HAP-1 (cell line): ENCODE measurements at regions of chr3 and their contacts with region 1.

Region 1: GRCh38 chr3:122679085-122679881 is 1.4 kb upstream of the PARP14 start:
- DNase-seq: peak; percentile 74 to 89
- H3K4me3 ChIP-seq: no peak overlapping the region
- H3K4me1 ChIP-seq: peaks cover 13% of the 10 kb centered on the region
- H3K27me3 ChIP-seq: no peaks in the 10 kb centered on the region

Region 2: GRCh38 chr3:122458992-122459391 is 220.3 kb before region 1 on chr3:
- in situ Hi-C with region 1: loop called (anchors 5 kb)
- DNase-seq: peak; percentile 28 to 47
- H3K4me3 ChIP-seq: no peak overlapping the region
- H3K4me1 ChIP-seq: no peaks in the 10 kb centered on the region
- H3K27me3 ChIP-seq: no peaks in the 10 kb centered on the region

Region 3: DNA sequence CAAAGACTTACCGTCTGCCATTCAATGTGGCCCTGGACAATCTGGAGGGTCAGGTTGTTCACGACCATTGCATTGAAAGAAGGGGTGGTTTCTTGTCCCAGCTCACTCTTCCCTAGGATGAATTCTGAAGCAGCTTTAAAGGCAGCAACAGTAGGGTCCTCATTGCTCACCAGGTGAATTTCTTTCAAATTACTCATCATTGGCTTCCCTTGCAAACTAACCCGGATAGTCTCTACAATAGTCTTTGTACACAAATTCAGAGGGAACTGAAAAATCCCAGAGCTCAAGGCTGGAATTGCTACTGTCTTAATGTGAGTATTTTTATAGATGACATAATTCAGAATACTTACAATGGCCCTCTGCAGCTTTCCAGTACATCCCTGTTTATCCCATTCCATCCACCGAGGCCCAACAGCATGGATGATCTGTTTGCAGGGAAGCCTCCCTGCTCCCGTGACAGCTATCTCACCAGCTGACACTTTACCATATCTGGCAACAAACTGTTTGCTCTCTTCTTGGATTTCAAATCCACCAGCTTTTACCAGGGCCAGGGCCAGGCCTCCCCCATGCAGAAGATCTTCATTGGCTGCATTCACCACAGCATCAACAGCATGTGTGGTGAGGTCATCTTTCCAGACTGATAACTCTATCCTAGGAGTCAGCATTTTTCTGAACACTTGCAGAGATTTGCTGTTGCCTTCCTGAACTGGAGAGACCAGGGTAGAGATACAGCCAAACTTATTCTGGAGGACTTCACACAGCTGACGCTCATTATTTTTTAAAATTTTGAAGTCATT is 123.8 kb before region 1 on chr3:
- in situ Hi-C with region 1: loop called (anchors 5 kb)
- DNase-seq: no peak
- H3K4me3 ChIP-seq: no peak overlapping the region
- H3K4me1 ChIP-seq: no peaks in the 10 kb centered on the region; the same call in 1 of the 2 replicates
- H3K27me3 ChIP-seq: no peaks in the 10 kb centered on the region

Region 4: GRCh38 chr3:122902326-122902725 is 223.0 kb after region 1 on chr3:
- in situ Hi-C with region 1: no loop called
- DNase-seq: no peak
- H3K4me3 ChIP-seq: no peak overlapping the region
- H3K4me1 ChIP-seq: no peaks in the 10 kb centered on the region
- H3K27me3 ChIP-seq: no peaks in the 10 kb centered on the region

Region 5: DNA sequence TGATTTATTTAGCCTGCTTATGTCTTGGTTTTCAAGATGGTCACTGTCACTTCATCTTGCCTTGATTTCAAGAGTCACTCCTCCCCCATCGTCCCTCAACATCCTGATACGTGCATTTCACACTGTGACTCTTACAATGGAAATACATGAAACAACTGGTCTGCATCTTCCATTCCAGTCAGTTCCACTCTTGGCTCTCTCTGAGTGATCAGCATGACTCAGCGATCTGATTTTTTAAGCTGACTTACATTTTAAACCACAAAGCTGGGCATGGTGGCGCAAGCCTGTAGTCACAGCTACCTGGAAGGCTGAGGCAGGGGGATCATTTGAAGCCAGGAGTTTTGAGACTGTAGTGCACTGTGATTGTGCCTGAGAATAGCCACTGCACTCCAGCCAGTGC is 1583.9 kb after region 1 on chr3:
- in situ Hi-C with region 1: no loop called
- DNase-seq: no peak
- H3K4me3 ChIP-seq: no peak overlapping the region
- H3K4me1 ChIP-seq: no peaks in the 10 kb centered on the region; the same call in 1 of the 2 replicates
- H3K27me3 ChIP-seq: peaks cover 5% of the 10 kb centered on the region; the same call in 1 of the 2 replicates